GM12878 (cell line): ENCODE measurements at regions of chr7 and their contacts with region 1.

Region 1: GRCh38 chr7:104643587-104644217 is 315.3 kb downstream of the LHFPL3 start:
- DNase-seq: no peak
- ATAC-seq: peak; percentile 58; the same call in 2 of the 3 replicates
- H3K4me3 ChIP-seq: no peak overlapping the region
- H3K27ac ChIP-seq: no peak overlapping the region
- H3K4me1 ChIP-seq: no peaks in the 10 kb centered on the region
- H3K27me3 ChIP-seq: no peaks in the 10 kb centered on the region; a peak in 2 of 4 replicates
- CTCF ChIP-seq: peak; percentile 54 to 60 (median 59)
- EP300 ChIP-seq: no peak
- POLR2A ChIP-seq: no peak
- RAD21 ChIP-seq: peak; percentile 38

Region 2: DNA sequence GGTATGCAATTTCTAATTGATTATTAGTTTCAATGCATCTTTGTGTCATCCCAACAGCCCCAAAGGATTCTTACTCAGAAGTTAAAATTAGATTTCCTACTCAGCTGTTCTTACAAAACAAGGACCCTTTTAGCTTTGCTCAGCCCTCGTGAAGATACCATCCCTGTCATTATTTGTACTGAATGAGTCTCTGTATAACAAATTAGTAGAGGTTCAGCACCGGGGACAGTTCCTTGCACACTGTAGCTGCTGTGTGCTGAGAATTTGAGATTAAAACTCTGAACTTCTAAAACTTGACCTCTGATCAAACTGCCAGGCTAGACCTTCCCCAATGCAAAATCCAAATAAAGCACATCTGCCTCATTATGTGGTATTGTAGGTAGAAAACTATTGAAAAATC is 16.2 kb before region 1 on chr7:
- CTCF ChIA-PET with region 1: interaction called, 12 read pairs
- POLR2A ChIA-PET with region 1: no interaction called
- RAD21 ChIA-PET with region 1: no interaction called
- SMC1A ChIA-PET with region 1: no interaction called
- in situ Hi-C with region 1: no loop called
- intact Hi-C with region 1: no loop called
- DNase-seq: no peak
- ATAC-seq: 0 out of 3 replicates have a peak, but pooled peaks have one; percentile 32
- H3K4me3 ChIP-seq: no peak overlapping the region
- H3K27ac ChIP-seq: no peak overlapping the region
- H3K4me1 ChIP-seq: no peaks in the 10 kb centered on the region
- H3K27me3 ChIP-seq: no peaks in the 10 kb centered on the region
- CTCF ChIP-seq: no peak
- EP300 ChIP-seq: no peak
- POLR2A ChIP-seq: no peak
- RAD21 ChIP-seq: no peak

Region 3: GRCh38 chr7:104848138-104848990 is 204.7 kb after region 1 on chr7:
- CTCF ChIA-PET with region 1: interaction called, 62 read pairs
- POLR2A ChIA-PET with region 1: no interaction called
- RAD21 ChIA-PET with region 1: interaction called, 10 read pairs
- SMC1A ChIA-PET with region 1: interaction called, 36 read pairs
- in situ Hi-C with region 1: loop called (anchors 5 kb)
- intact Hi-C with region 1: loop called (anchors 1 kb)
- DNase-seq: no peak
- ATAC-seq: peak; percentile 78
- H3K4me3 ChIP-seq: no peak overlapping the region
- H3K27ac ChIP-seq: no peak overlapping the region
- H3K4me1 ChIP-seq: peaks cover 4% of the 10 kb centered on the region; the same call in 1 of the 2 replicates
- H3K27me3 ChIP-seq: no peaks in the 10 kb centered on the region
- CTCF ChIP-seq: peak; percentile 76 to 89 (median 79)
- EP300 ChIP-seq: no peak
- POLR2A ChIP-seq: no peak
- RAD21 ChIP-seq: peak; percentile 90

Region 4: GRCh38 chr7:104908636-104909035 is 264.9 kb after region 1 on chr7:
- CTCF ChIA-PET with region 1: interaction called, 11 read pairs
- POLR2A ChIA-PET with region 1: no interaction called
- RAD21 ChIA-PET with region 1: interaction called, 3 read pairs
- SMC1A ChIA-PET with region 1: no interaction called
- in situ Hi-C with region 1: no loop called
- intact Hi-C with region 1: no loop called
- DNase-seq: no peak
- ATAC-seq: no peak
- H3K4me3 ChIP-seq: no peak overlapping the region
- H3K27ac ChIP-seq: no peak overlapping the region
- H3K4me1 ChIP-seq: no peaks in the 10 kb centered on the region
- H3K27me3 ChIP-seq: no peaks in the 10 kb centered on the region
- CTCF ChIP-seq: no peak
- EP300 ChIP-seq: no peak
- POLR2A ChIP-seq: no peak
- RAD21 ChIP-seq: no peak

Region 5: GRCh38 chr7:104914421-104914820 is 270.7 kb after region 1 on chr7:
- CTCF ChIA-PET with region 1: interaction called, 103 read pairs
- POLR2A ChIA-PET with region 1: no interaction called
- RAD21 ChIA-PET with region 1: interaction called, 23 read pairs
- SMC1A ChIA-PET with region 1: interaction called, 60 read pairs
- in situ Hi-C with region 1: loop called (anchors 5 kb)
- intact Hi-C with region 1: loop called (anchors 1 kb)
- DNase-seq: no peak
- ATAC-seq: no peak
- H3K4me3 ChIP-seq: no peak overlapping the region
- H3K27ac ChIP-seq: no peak overlapping the region
- H3K4me1 ChIP-seq: peaks cover 4% of the 10 kb centered on the region; the same call in 1 of the 2 replicates
- H3K27me3 ChIP-seq: no peaks in the 10 kb centered on the region
- CTCF ChIP-seq: no peak
- EP300 ChIP-seq: no peak
- POLR2A ChIP-seq: no peak
- RAD21 ChIP-seq: no peak